ENCODE measurements at regions of chr15 and their contacts with region 1.

Region 1: DNA sequence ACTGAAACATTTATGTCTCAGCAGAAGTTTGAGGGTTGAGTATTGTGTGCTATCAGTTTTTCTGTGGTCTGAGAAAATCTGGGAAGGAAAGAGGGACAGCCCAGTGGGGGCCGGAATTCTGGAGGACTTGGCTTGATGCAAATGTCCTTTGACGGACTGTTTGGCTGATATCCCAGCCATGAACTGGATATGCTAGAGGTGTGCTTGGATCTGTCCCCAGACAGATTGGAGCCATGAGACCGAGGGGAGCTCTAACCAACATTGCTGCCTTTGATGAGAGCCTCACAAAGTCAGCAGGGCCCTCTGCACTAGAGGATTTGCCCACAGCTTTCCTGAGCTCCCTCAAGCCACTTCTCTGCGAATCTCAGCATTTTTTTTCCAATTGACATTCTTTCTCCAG is 405.6 kb downstream of the NTRK3 start:
- DNase-seq: no peak
- ATAC-seq: no peak
- H3K4me3 ChIP-seq: no peak overlapping the region
- H3K27ac ChIP-seq: no peak overlapping the region
- H3K4me1 ChIP-seq: no peaks in the 10 kb centered on the region
- H3K27me3 ChIP-seq: no peaks in the 10 kb centered on the region
- CTCF ChIP-seq: no peak
- POLR2A ChIP-seq: no peak

Region 2: GRCh38 chr15:87887177-87887576 is 36.3 kb after region 1 on chr15:
- in situ Hi-C with region 1: no loop called
- intact Hi-C with region 1: no loop called
- DNase-seq: no peak
- ATAC-seq: no peak
- H3K4me3 ChIP-seq: no peak overlapping the region
- H3K27ac ChIP-seq: no peak overlapping the region
- H3K4me1 ChIP-seq: no peaks in the 10 kb centered on the region
- H3K27me3 ChIP-seq: peaks cover 0 to 3% (median 0%) of the 10 kb centered on the region in 3 donors
- CTCF ChIP-seq: no peak
- POLR2A ChIP-seq: no peak

Region 3: DNA sequence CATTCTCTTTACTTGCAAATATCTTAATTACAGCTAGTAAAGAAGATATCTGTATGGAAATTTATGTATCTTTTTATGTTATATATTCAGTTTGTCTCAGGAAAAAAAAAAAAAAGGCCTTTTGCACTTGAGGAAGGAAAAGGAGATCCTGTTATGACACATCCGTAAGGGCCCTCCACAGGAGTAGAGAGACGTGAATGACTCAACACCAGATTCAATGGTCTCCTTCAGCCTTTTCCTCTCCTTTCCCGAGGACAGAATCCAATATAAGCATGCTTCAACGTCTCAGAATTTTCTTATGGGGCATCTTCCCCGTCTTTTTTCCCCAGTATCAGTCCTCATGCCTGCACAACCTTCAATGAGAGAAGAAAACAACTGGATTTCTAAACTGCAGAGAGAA is 65.3 kb after region 1 on chr15:
- in situ Hi-C with region 1: loop called in 1 of 4 experiments (anchors 10 kb)
- intact Hi-C with region 1: no loop called
- DNase-seq: no peak
- ATAC-seq: no peak
- H3K4me3 ChIP-seq: no peak overlapping the region
- H3K27ac ChIP-seq: no peak overlapping the region
- H3K4me1 ChIP-seq: no peaks in the 10 kb centered on the region
- H3K27me3 ChIP-seq: no peaks in the 10 kb centered on the region
- CTCF ChIP-seq: no peak
- POLR2A ChIP-seq: no peak